ENCODE measurements at regions of chr22 and their contacts with region 1.

Region 1: DNA sequence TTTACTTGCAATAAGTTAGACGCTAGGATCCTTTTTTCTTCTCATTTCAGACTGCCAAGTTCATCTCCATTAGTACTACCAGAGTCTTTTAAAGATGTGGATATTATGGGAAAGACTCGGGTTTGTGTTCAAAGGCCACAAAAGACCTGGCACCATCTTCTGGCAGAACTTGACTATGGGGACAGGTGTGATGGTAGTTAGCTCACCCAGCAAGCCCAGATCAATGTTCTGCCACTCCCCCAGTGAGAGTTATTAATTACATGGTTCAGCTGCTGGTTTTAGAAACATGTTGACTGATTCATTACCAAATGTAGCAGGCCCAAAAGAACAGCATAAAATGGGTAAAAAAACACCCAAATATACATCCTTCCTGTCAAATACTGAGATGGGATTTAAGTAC is 333.5 kb upstream of the PITPNB start:
- DNase-seq: no peak
- H3K4me3 ChIP-seq: no peak overlapping the region
- H3K27ac ChIP-seq: no peak overlapping the region
- H3K27me3 ChIP-seq: no peaks in the 10 kb centered on the region
- CTCF ChIP-seq: no peak

Region 2: DNA sequence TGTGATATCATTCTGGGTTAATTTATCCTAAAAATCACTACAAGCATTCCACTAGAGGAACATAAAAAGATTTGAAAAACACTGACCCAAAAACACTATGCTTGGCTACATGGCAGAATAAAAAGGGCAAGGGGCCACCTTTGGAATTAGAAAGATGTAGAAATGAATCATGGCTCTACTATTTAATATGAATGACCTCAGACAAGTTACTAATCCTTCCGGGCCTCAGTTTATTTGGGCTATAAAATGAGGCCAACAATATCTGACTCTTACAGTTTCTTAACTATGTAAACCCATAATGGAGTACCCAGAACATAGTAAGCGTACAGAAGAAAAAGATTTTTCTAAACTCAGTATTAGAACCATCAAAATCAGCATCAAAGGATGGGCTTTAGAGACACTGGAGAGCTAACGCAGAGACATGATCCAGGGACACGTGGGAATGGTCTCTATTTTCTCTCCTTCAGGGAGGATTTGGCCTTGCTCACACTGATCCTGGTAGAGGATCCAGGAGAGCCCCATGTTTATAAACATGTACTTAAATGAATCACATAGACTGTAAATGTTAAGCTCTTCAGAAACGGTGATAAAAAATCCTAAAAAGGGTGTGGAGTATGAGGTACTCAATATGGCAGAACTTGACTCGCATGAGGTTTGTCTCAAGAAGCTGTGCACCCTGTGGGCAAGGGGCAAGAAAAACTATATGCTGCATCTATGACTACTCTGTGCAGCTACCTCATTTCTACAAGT is 45.1 kb before region 1 on chr22:
- intact Hi-C with region 1: no loop called
- DNase-seq: no peak
- H3K4me3 ChIP-seq: no peak overlapping the region
- H3K27ac ChIP-seq: no peak overlapping the region
- H3K27me3 ChIP-seq: no peaks in the 10 kb centered on the region
- CTCF ChIP-seq: no peak

Region 3: DNA sequence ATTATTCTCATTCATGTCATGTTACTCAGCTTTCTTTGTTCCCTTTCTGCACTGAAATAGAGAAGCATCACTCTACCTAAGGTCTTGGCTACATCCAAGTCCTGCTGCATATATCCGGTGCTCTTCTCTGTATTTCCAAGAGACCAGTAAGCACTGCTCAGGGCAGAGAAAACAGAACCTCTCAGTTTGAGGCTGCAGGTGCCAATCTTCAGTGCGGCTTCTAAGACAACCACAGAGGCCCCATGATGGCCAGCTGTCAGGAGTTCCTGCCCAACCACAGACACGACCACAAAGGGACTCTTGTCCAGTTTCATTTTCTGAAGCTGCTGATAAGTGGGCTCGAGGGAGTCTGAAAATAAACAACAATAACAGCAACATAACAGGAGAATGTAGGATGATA is 45.0 kb after region 1 on chr22:
- intact Hi-C with region 1: loop called in 1 of 2 experiments (anchors 5 kb)
- DNase-seq: peak in 6 of 10 donors; percentile 14 to 58 (median 46)
- H3K4me3 ChIP-seq: peak overlapping the region in 33 of 59 donors; percentile 1 to 49 (median 21)
- H3K27ac ChIP-seq: peak overlapping the region in 54 of 59 donors; percentile 3 to 83 (median 58)
- H3K27me3 ChIP-seq: no peaks in the 10 kb centered on the region
- CTCF ChIP-seq: peak in 1 of 56 donors; percentile 13

Measured in dorsolateral prefrontal cortex (tissue), 120 donors.